ENCODE measurements at regions of chr6 and their contacts with region 1.

Region 1: DNA sequence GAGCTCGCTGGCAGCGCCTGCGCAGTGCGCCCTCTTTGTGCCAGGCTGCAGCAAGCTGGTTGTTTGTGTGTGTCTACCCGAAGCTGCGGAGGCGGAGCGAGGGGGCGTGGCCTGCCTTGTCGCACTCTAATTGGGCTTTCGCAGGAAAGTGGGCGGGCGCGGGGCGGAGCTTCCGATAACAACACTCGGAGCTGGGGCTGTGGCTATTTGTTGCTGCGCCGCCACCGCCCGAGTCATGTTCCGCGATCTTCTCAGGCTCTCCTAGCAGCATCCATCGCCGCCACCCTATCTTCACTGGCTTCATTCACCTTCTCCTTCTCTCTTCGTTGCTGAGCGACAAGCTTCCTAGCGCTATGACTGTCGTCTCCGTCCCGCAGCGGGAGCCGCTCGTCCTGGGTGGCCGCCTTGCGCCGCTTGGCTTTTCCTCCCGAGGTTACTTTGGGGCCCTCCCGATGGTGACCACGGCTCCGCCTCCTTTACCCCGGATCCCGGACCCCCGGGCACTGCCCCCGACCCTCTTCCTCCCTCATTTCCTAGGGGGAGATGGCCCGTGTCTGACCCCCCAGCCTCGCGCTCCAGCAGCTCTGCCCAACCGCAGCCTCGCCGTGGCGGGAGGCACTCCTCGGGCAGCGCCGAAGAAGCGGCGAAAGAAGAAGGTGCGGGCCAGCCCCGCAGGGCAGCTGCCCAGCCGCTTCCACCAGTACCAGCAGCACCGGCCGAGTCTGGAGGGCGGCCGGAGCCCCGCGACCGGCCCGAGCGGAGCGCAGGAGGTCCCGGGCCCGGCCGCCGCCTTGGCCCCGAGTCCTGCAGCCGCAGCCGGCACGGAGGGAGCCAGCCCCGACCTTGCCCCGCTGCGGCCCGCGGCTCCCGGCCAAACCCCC is at the start of gene PNRC1:
- DNase-seq: peak; percentile 100
- ATAC-seq: peak; percentile 65
- H3K4me3 Mint-ChIP-seq: peak within 1 kb of the TSS; percentile 92
- H3K27ac Mint-ChIP-seq: peak within 1 kb of the TSS; percentile 98
- H3K4me1 Mint-ChIP-seq: peaks cover 25% of the 10 kb centered on the region
- H3K27me3 Mint-ChIP-seq: no peaks in the 10 kb centered on the region
- total RNA-seq, gene PNRC1: 233 to 264 TPM

Region 2: GRCh38 chr6:88982720-88983119 is 98.1 kb before region 1 on chr6:
- POLR2A ChIA-PET with region 1: interaction called, 33 read pairs
- DNase-seq: no peak
- ATAC-seq: peak; percentile 73
- H3K4me3 Mint-ChIP-seq: no peak overlapping the region
- H3K27ac Mint-ChIP-seq: no peak overlapping the region
- H3K4me1 Mint-ChIP-seq: peaks cover 3% of the 10 kb centered on the region
- H3K27me3 Mint-ChIP-seq: peaks cover 15% of the 10 kb centered on the region

Region 3: DNA sequence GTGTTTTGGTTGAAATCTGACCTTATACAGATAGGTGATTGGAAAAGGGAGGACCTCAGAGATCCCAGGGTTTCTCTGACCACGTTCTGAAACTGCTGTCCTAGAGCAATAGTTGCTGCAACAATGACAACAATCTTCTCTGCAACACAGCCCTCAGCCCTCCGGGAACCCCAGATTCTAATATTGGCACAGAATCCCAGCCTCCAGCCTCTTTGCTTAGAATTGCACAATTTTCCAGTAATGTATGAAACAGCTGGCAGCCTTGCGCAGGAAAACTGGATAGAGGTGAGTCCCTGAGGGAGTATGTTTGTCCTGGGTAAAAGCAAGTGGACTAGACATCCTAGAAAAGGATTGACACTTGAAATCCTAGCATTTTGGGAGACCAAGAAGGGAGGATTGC is 30.6 kb before region 1 on chr6:
- POLR2A ChIA-PET with region 1: interaction called, 30 read pairs
- DNase-seq: no peak
- ATAC-seq: no peak
- H3K4me3 Mint-ChIP-seq: no peak overlapping the region
- H3K27ac Mint-ChIP-seq: no peak overlapping the region
- H3K4me1 Mint-ChIP-seq: peaks cover 15% of the 10 kb centered on the region
- H3K27me3 Mint-ChIP-seq: no peaks in the 10 kb centered on the region

Region 4: GRCh38 chr6:89117211-89118108 is 36.7 kb after region 1 on chr6 and contains the start of gene SRSF12:
- POLR2A ChIA-PET with region 1: interaction called, 10 read pairs
- DNase-seq: peak; percentile 69
- ATAC-seq: peak; percentile 85
- H3K4me3 Mint-ChIP-seq: peak within 1 kb of the TSS; percentile 80
- H3K27ac Mint-ChIP-seq: peak within 1 kb of the TSS; percentile 13
- H3K4me1 Mint-ChIP-seq: peaks cover 8% of the 10 kb centered on the region
- H3K27me3 Mint-ChIP-seq: peaks cover 26% of the 10 kb centered on the region
- total RNA-seq, gene SRSF12: not detected

Region 5: DNA sequence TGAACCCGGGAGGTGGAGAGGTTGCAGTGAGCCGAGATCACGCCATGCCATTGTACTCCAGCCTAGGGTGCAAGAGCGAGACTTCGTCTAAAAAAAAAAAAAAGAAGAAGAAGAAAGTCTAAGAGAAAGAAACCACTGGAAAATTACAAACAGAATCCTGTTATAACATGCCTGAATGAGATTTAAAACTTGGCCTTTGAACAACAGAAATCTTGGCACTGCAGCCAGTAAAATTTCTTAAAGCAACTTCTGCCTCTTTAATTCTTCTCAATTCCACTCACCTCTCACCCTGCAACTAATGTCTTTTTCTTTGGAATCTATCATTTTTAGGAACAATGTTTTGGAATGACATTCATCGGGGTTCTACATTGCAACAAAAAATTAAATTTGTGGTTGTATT is 91.3 kb after region 1 on chr6:
- POLR2A ChIA-PET with region 1: no interaction called
- DNase-seq: no peak
- ATAC-seq: no peak
- H3K4me3 Mint-ChIP-seq: no peak overlapping the region
- H3K27ac Mint-ChIP-seq: no peak overlapping the region
- H3K4me1 Mint-ChIP-seq: no peaks in the 10 kb centered on the region
- H3K27me3 Mint-ChIP-seq: peaks cover 2% of the 10 kb centered on the region

Region 6: DNA sequence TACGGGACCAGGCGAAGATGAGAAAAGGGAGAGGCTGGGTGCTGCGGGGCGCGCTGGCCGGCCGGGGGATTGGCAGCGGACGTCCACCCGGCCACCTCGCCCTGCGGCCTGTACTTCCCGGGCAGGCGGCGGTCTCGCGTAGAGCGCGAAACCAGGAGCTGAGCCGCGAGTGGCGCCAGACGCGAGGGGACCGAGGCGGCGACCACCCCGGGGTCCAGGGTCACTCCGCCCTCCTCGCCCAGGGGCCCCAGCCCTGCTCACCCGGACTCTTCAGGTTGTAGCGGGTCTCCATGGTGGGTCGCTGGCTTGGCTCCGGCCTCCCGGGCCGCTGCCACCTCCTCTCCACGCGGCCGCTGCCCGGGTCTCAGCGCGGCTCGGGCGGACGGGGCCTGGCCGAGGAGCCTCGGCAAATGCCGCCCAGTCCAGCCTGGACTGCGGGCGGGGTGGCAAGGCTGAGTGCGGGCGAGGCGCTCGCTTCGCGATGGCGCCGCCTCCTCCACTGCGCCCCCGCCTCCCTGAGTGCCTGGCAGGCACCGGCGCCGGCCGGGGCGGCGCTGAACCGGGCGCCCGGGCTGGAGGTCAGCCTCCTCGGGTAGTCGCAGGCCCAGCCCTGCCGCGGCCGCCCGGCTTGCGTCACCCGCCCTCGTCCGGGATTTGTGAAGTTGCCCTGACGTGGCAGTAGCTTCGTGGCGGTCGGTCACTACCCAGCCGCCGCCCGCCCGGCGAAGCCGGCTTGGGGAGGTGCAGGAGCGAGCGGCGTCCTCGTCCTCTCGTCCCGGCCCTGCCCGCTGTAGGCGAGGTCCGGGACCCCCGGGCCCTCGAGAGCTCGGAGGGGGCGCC is 271.7 kb after region 1 on chr6 and contains the start of gene UBE2J1:
- POLR2A ChIA-PET with region 1: interaction called, 24 read pairs
- DNase-seq: peak; percentile 83
- ATAC-seq: peak; percentile 84
- H3K4me3 Mint-ChIP-seq: peak within 1 kb of the TSS; percentile 96
- H3K27ac Mint-ChIP-seq: peak within 1 kb of the TSS; percentile 93
- H3K4me1 Mint-ChIP-seq: peaks cover 53% of the 10 kb centered on the region
- H3K27me3 Mint-ChIP-seq: no peaks in the 10 kb centered on the region
- total RNA-seq, gene UBE2J1: 26.5 to 27.9 TPM